Activated B cell treated with CpG ODN at 0.5 μM for 24 hours (primary cell): ENCODE measurements at regions of chr5 and their contacts with region 1.

Region 1: GRCh38 chr5:163915481-163915961 is 410.1 kb downstream of the MAT2B start:
- DNase-seq: peak; percentile 50
- ATAC-seq: peak; percentile 59
- H3K4me3 Mint-ChIP-seq: peak overlapping the region; percentile 85
- H3K27ac Mint-ChIP-seq: peak overlapping the region; percentile 99
- H3K4me1 Mint-ChIP-seq: peaks cover 74% of the 10 kb centered on the region
- H3K27me3 Mint-ChIP-seq: no peaks in the 10 kb centered on the region
- CTCF ChIP-seq: no peak

Region 2: GRCh38 chr5:163459922-163460766 is 455.4 kb before region 1 on chr5 and contains the starts of genes HMMR and NUDCD2:
- CTCF ChIA-PET with region 1: no interaction called
- POLR2A ChIA-PET with region 1: interaction called, 21 read pairs
- intact Hi-C with region 1: loop called (anchors 1 kb)
- DNase-seq: peak; percentile 96
- ATAC-seq: peak; percentile 87
- H3K4me3 Mint-ChIP-seq: peak within 1 kb of the TSS; percentile 97
- H3K27ac Mint-ChIP-seq: peak within 1 kb of the TSS; percentile 100
- H3K4me1 Mint-ChIP-seq: peaks cover 42% of the 10 kb centered on the region
- H3K27me3 Mint-ChIP-seq: no peaks in the 10 kb centered on the region
- CTCF ChIP-seq: no peak
- total RNA-seq, gene HMMR: 2.8 and 3.3 TPM in 2 replicates
- total RNA-seq, gene NUDCD2: 23.5 and 28.1 TPM in 2 replicates

Region 3: DNA sequence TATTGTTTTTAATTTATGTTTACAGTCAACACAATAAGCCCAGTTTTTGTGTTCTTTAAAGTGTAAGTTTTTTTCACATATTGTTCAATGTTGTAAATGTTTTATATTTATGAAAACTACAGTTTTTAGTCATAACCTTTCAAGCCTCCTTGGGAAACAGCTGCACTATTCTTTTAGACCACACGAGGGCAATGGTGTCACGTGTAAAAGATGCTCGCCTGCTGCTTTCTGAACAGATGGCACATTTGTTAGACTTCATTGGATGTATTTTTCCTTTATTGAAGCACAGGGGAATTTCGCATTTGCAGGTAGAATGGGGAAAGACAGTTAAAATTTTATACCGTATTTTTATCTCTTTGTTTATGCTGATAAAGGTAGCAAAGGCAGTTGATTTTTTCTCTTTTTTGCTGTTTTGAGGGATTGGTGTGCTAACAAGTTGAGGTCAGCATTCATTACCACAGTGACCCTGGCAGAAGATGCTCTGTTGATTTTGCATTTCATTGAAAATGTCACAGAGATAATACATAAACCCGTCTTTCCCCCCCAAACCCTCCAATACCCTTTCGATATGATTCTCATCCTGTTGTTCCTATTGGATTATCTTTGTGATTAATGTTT is 351.1 kb before region 1 on chr5:
- CTCF ChIA-PET with region 1: no interaction called
- POLR2A ChIA-PET with region 1: no interaction called
- intact Hi-C with region 1: loop called (anchors 10 kb)
- DNase-seq: peak; percentile 21
- ATAC-seq: peak; percentile 64
- H3K4me3 Mint-ChIP-seq: no peak overlapping the region
- H3K27ac Mint-ChIP-seq: no peak overlapping the region
- H3K4me1 Mint-ChIP-seq: peaks cover 24% of the 10 kb centered on the region
- H3K27me3 Mint-ChIP-seq: peaks cover 38% of the 10 kb centered on the region
- CTCF ChIP-seq: peak; percentile 90

Region 4: DNA sequence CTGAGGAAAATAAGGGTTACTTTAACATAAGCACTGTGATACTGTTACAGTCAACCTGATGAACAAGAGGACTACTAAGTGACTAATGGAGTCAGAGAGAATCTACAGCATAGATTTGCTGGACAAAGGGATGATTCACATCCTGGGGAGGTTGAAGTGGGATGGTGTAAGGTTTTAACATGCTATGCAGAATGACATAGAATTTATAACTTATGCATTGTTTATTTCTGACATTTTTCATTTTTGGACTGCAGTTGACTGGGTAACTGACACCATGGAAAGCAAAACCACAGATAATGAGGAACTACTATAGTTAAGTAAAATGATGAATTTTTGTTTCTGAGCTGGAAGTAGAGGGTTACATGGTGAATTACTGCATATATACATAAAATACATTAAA is 20.9 kb before region 1 on chr5:
- CTCF ChIA-PET with region 1: no interaction called
- POLR2A ChIA-PET with region 1: interaction called, 5 read pairs
- intact Hi-C with region 1: loop called (anchors 2 kb)
- DNase-seq: no peak
- ATAC-seq: no peak
- H3K4me3 Mint-ChIP-seq: no peak overlapping the region
- H3K27ac Mint-ChIP-seq: no peak overlapping the region
- H3K4me1 Mint-ChIP-seq: peaks cover 33% of the 10 kb centered on the region
- H3K27me3 Mint-ChIP-seq: no peaks in the 10 kb centered on the region
- CTCF ChIP-seq: no peak

Region 5: GRCh38 chr5:164013077-164013670 is 97.7 kb after region 1 on chr5:
- CTCF ChIA-PET with region 1: interaction called, 5 read pairs
- POLR2A ChIA-PET with region 1: no interaction called
- intact Hi-C with region 1: loop called (anchors 1 kb)
- DNase-seq: no peak
- ATAC-seq: peak; percentile 50
- H3K4me3 Mint-ChIP-seq: no peak overlapping the region
- H3K27ac Mint-ChIP-seq: no peak overlapping the region
- H3K4me1 Mint-ChIP-seq: peaks cover 13% of the 10 kb centered on the region
- H3K27me3 Mint-ChIP-seq: no peaks in the 10 kb centered on the region
- CTCF ChIP-seq: no peak

Region 6: DNA sequence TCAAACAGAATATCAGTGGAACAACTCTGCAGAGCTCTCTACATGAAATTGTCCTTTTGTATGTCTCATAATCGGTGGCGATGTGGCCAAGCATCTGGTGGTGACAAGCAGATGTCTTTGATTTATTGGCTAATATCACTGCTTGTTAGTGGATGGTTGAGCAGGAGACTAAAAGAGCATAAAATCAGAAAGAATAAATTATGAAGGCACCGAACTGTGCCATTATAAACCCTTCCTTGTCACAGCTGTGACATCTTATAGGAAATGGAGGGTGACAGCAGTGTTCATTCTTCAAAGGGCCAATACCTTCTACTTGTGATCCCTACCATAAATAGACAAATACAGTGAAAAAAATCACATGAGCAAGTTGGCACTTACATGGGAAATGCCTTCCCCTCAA is 994.2 kb after region 1 on chr5:
- CTCF ChIA-PET with region 1: no interaction called
- POLR2A ChIA-PET with region 1: no interaction called
- intact Hi-C with region 1: no loop called
- DNase-seq: no peak
- ATAC-seq: no peak
- H3K4me3 Mint-ChIP-seq: no peak overlapping the region
- H3K27ac Mint-ChIP-seq: no peak overlapping the region
- H3K4me1 Mint-ChIP-seq: no peaks in the 10 kb centered on the region
- H3K27me3 Mint-ChIP-seq: no peaks in the 10 kb centered on the region
- CTCF ChIP-seq: no peak

Region 7: GRCh38 chr5:165039748-165040147 is 1124.2 kb after region 1 on chr5:
- CTCF ChIA-PET with region 1: no interaction called
- POLR2A ChIA-PET with region 1: no interaction called
- intact Hi-C with region 1: no loop called
- DNase-seq: no peak
- ATAC-seq: no peak
- H3K4me3 Mint-ChIP-seq: no peak overlapping the region
- H3K27ac Mint-ChIP-seq: no peak overlapping the region
- H3K4me1 Mint-ChIP-seq: no peaks in the 10 kb centered on the region
- H3K27me3 Mint-ChIP-seq: no peaks in the 10 kb centered on the region
- CTCF ChIP-seq: no peak